ENCODE measurements at regions of chr15 and their contacts with region 1.

Region 1: GRCh38 chr15:40782580-40783227 is 12.9 kb downstream of the C15orf62 start:
- DNase-seq: peak; percentile 87
- H3K4me3 Mint-ChIP-seq: no peak overlapping the region
- H3K27ac Mint-ChIP-seq: no peak overlapping the region
- H3K4me1 Mint-ChIP-seq: peaks cover 22% of the 10 kb centered on the region
- H3K27me3 Mint-ChIP-seq: no peaks in the 10 kb centered on the region

Region 2: GRCh38 chr15:40344631-40345120 is 438.0 kb before region 1 on chr15:
- CTCF ChIA-PET with region 1: no interaction called
- POLR2A ChIA-PET with region 1: no interaction called
- intact Hi-C with region 1: no loop called
- DNase-seq: peak; percentile 80
- H3K4me3 Mint-ChIP-seq: no peak overlapping the region
- H3K27ac Mint-ChIP-seq: no peak overlapping the region
- H3K4me1 Mint-ChIP-seq: no peaks in the 10 kb centered on the region
- H3K27me3 Mint-ChIP-seq: no peaks in the 10 kb centered on the region

Region 3: GRCh38 chr15:40593588-40594428 is 188.9 kb before region 1 on chr15 and contains the start of gene KNL1:
- CTCF ChIA-PET with region 1: interaction called, 21 read pairs
- POLR2A ChIA-PET with region 1: no interaction called
- intact Hi-C with region 1: no loop called
- DNase-seq: peak; percentile 95
- H3K4me3 Mint-ChIP-seq: peak within 1 kb of the TSS; percentile 98
- H3K27ac Mint-ChIP-seq: peak within 1 kb of the TSS; percentile 99
- H3K4me1 Mint-ChIP-seq: peaks cover 26% of the 10 kb centered on the region
- H3K27me3 Mint-ChIP-seq: peaks cover 10% of the 10 kb centered on the region
- total RNA-seq, gene KNL1: 32.8 to 33.1 TPM

Region 4: DNA sequence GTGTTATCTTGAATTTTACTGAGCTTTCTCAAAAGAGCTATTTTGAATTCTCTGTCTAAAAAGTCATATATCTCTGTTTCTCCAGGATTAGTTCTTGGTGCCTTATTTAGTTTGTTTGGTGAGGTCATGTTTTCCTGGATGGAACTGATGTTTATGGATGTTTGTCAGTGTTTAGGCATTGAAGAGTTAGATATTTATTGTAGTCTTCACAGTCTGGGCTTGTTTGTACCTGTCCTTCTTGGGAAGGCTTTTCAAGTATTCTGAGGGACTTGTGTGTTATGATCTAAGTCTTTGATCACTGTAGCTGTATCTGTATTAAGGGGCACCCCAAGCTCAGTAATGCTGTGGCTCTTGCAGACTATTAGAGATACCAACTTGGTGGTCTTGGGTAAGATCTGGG is 98.3 kb before region 1 on chr15:
- CTCF ChIA-PET with region 1: interaction called, 24 read pairs
- POLR2A ChIA-PET with region 1: no interaction called
- intact Hi-C with region 1: loop called (anchors 1 kb)
- DNase-seq: no peak
- H3K4me3 Mint-ChIP-seq: no peak overlapping the region
- H3K27ac Mint-ChIP-seq: no peak overlapping the region
- H3K4me1 Mint-ChIP-seq: no peaks in the 10 kb centered on the region
- H3K27me3 Mint-ChIP-seq: no peaks in the 10 kb centered on the region

Region 5: GRCh38 chr15:40702077-40702476 is 80.6 kb before region 1 on chr15:
- CTCF ChIA-PET with region 1: interaction called, 10 read pairs
- POLR2A ChIA-PET with region 1: no interaction called
- intact Hi-C with region 1: no loop called
- DNase-seq: no peak
- H3K4me3 Mint-ChIP-seq: no peak overlapping the region
- H3K27ac Mint-ChIP-seq: no peak overlapping the region
- H3K4me1 Mint-ChIP-seq: peaks cover 15% of the 10 kb centered on the region
- H3K27me3 Mint-ChIP-seq: no peaks in the 10 kb centered on the region

Region 6: GRCh38 chr15:40743921-40744814 is 38.5 kb before region 1 on chr15:
- CTCF ChIA-PET with region 1: interaction called, 34 read pairs
- POLR2A ChIA-PET with region 1: no interaction called
- intact Hi-C with region 1: loop called (anchors 1 kb)
- DNase-seq: peak; percentile 86
- H3K4me3 Mint-ChIP-seq: peak overlapping the region; percentile 49
- H3K27ac Mint-ChIP-seq: peak overlapping the region; percentile 89
- H3K4me1 Mint-ChIP-seq: peaks cover 29% of the 10 kb centered on the region
- H3K27me3 Mint-ChIP-seq: no peaks in the 10 kb centered on the region

Region 7: GRCh38 chr15:40754883-40755811 is 27.6 kb before region 1 on chr15 and contains the start of gene RMDN3:
- CTCF ChIA-PET with region 1: interaction called, 11 read pairs
- POLR2A ChIA-PET with region 1: no interaction called
- intact Hi-C with region 1: no loop called
- DNase-seq: peak; percentile 96
- H3K4me3 Mint-ChIP-seq: peak within 1 kb of the TSS; percentile 90
- H3K27ac Mint-ChIP-seq: peak within 1 kb of the TSS; percentile 94
- H3K4me1 Mint-ChIP-seq: peaks cover 28% of the 10 kb centered on the region
- H3K27me3 Mint-ChIP-seq: no peaks in the 10 kb centered on the region
- total RNA-seq, gene RMDN3: 22.6 to 22.7 TPM

Region 8: GRCh38 chr15:40763801-40764732 is 18.6 kb before region 1 on chr15 and contains the start of gene GCHFR:
- CTCF ChIA-PET with region 1: interaction called, 47 read pairs
- POLR2A ChIA-PET with region 1: interaction called, 3 read pairs
- intact Hi-C with region 1: loop called (anchors 2 kb)
- DNase-seq: peak; percentile 82
- H3K4me3 Mint-ChIP-seq: peak within 1 kb of the TSS; percentile 63
- H3K27ac Mint-ChIP-seq: peak within 1 kb of the TSS; percentile 79
- H3K4me1 Mint-ChIP-seq: peaks cover 31% of the 10 kb centered on the region
- H3K27me3 Mint-ChIP-seq: no peaks in the 10 kb centered on the region
- total RNA-seq, gene GCHFR: 36.0 to 40.2 TPM

Region 9: GRCh38 chr15:40985541-40986330 is 203.0 kb after region 1 on chr15:
- CTCF ChIA-PET with region 1: no interaction called
- POLR2A ChIA-PET with region 1: no interaction called
- intact Hi-C with region 1: no loop called
- DNase-seq: no peak
- H3K4me3 Mint-ChIP-seq: no peak overlapping the region
- H3K27ac Mint-ChIP-seq: no peak overlapping the region
- H3K4me1 Mint-ChIP-seq: peaks cover 10% of the 10 kb centered on the region
- H3K27me3 Mint-ChIP-seq: no peaks in the 10 kb centered on the region